AG04449 (cell line): ENCODE measurements at regions of chr20 and their contacts with region 1.

Region 1: DNA sequence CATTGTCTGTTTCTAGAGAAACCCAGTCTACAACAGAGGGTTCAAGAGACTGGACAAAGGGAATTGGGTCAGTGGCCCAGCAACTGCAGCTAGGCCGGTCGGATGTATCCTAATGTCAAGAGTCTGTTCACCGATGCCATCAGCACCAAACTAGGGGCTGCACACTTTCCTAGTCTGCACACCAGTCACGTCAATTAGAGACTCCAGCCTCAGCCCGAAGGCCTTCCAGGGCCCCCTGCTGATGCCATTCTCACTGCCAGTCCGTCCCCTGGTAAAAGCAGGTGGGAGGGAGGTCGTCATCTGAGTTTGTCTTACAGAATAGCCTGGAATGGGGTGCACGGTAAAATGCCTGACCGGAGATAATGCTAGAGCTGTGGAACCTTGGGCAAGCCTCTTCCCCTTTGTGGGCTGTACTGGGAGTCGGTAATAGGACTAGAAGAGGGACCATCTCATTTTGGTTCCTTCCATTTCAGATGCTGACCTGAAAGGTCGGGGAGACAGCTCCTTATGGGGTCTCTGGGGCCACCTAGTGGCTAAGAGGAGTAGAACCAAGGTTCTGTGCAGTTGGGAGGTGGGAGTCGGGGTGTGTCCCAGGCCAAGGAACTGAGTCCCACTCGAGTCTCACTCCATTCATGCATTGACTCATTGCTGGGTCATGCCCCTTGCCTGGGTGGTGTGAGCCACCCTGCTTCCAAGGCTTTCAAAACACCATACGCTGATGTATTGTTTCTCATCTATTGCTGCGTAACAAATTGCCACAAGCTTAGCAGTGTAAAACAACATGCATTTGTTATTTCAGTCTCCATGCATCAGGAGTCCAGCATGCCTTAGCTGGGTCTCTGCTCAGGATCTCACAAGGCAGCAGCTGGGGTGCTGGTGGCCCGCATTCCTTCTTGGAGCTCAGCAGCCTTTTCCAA is 5.1 kb downstream of the SOX12 start:
- DNase-seq: no peak
- H3K4me3 ChIP-seq: no peak overlapping the region
- CTCF ChIP-seq: peak; percentile 84

Region 2: DNA sequence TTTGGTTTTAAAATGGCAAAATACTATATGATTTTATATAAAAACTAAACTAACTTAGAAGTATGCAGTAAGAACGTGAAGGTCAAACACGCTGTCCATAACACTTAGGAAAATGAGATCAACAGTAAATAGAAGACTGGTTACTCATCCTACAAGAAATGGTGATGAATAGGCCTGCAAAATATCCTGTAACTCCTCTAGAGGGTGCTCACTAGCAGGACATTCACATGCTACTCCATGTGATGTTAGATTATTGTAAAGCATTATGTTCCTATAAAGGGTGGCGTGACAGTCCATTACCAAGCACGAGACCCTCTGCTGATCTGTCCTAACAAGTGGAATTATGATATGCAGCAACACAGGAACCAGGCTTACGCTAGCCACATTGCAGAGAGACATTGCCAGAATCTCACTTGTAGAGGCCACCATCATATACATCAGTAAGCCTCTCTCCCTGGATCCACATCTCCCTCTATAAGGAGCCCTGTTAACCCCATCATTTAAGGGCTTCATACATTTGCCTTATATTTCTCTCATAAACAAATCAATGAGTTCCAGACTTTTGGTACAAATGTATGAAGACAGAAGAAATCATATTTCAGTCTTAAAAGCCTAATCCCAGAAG is 121.4 kb before region 1 on chr20:
- CTCF ChIA-PET with region 1: interaction called, 20 read pairs
- POLR2A ChIA-PET with region 1: interaction called, 3 read pairs
- DNase-seq: peak; percentile 33
- H3K4me3 ChIP-seq: no peak overlapping the region
- CTCF ChIP-seq: peak; percentile 63

Region 3: GRCh38 chr20:258963-259362 is 71.5 kb before region 1 on chr20:
- CTCF ChIA-PET with region 1: interaction called, 10 read pairs
- POLR2A ChIA-PET with region 1: no interaction called
- DNase-seq: no peak
- H3K4me3 ChIP-seq: no peak overlapping the region
- CTCF ChIP-seq: peak; percentile 18

Region 4: DNA sequence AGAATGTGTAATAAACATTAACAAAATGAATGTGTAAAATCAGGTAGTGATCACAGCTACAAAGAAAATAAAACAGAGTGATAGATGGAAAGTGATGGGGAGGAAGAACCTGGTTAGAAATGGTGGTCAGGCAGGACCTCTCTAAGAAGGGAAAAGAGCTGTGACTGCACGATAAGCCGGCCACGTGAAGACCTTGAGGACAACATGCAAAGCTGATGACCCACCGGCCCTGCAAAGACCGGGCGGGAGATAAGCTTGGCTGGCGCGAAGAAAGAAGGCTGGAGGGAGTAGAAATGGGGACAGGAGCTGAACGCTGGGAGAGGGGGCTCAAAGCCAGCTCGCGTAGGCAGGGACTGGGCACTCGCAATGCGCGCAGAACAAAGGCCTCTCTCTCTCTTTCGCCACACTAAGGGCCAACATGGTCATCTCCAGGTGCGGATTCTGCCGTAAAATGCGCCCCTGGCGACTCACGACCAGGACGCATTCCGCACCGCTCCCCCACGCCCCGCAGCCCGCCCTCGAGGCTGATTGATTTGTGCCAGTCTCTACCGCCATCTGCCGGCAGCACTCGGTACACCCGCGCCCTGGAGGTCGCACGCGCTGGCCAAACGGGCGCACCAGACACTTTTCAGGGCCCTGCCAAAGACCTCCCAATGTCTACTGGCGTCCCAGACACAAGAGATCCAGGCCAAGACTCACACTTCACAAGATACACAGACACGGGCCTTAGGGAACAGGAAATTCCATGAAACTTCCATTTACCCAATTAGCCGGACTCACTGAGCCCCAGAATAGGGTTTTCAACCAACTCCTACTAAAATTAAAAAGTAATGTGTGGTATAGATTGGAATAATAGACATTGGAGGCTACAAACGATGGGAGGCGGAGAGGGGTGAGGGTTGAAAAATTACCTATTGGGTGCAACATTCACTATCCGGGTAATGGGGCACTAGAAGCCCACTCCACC is 63.6 kb before region 1 on chr20:
- CTCF ChIA-PET with region 1: interaction called, 16 read pairs
- POLR2A ChIA-PET with region 1: interaction called, 3 read pairs
- DNase-seq: no peak
- H3K4me3 ChIP-seq: peak overlapping the region; percentile 67
- CTCF ChIP-seq: peak; percentile 99

Region 5: GRCh38 chr20:297098-297924 is 33.2 kb before region 1 on chr20 and contains the start of gene ZCCHC3:
- CTCF ChIA-PET with region 1: interaction called, 12 read pairs
- POLR2A ChIA-PET with region 1: interaction called, 25 read pairs
- DNase-seq: peak; percentile 63
- H3K4me3 ChIP-seq: peak within 1 kb of the TSS; percentile 98
- CTCF ChIP-seq: peak; percentile 30

Region 6: GRCh38 chr20:341682-342081 is 11.2 kb after region 1 on chr20:
- CTCF ChIA-PET with region 1: interaction called, 59 read pairs
- POLR2A ChIA-PET with region 1: interaction called, 4 read pairs
- DNase-seq: no peak
- H3K4me3 ChIP-seq: no peak overlapping the region
- CTCF ChIP-seq: no peak

Region 7: GRCh38 chr20:347640-348484 is 17.4 kb after region 1 on chr20:
- CTCF ChIA-PET with region 1: interaction called, 59 read pairs
- POLR2A ChIA-PET with region 1: interaction called, 5 read pairs
- DNase-seq: no peak
- H3K4me3 ChIP-seq: peak overlapping the region; percentile 76
- CTCF ChIP-seq: no peak

Region 8: GRCh38 chr20:391041-391711 is 60.7 kb after region 1 on chr20:
- CTCF ChIA-PET with region 1: no interaction called
- POLR2A ChIA-PET with region 1: no interaction called
- DNase-seq: no peak
- H3K4me3 ChIP-seq: no peak overlapping the region
- CTCF ChIP-seq: no peak